Ovary (tissue), 10 donors: ENCODE measurements at regions of chr10 and their contacts with region 1.

Region 1: DNA sequence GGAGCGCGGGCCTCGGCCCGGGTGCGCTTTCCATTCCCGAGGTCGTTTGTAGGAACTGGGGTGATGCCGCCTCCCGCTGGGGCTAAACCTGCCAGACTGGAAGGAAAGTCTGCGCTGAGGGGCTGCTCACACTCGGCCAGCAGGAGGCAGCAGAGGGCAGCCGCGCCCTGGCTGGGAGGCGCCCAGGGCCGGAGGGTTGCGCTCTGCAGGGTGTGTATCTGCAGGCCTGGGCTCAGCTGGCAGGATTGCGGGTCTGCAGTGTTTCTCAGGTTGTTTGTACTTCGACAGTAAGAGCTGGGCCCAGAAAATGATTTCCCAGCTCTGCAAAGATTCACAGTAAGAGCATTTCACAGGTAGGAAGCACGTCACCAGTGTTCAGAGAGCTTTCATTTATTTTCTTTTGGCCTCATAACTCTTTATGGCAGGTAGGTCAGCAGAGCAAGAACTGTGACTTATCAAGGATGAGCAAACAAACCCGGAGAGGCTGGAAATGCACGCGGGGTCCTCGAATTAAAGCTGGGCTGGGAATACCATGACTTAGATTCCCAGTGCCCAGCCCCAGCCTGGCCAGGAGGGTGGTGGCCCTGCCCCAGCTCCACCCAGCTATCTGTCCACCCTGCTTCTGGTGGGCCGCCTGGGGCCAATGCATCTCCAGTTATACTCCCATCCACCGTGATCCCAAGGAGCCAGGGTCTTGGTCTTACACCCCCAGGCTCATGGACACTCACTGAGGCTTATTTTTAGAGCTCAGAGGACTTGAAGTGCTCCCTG is 15.2 kb upstream of the PPP2R2D start:
- DNase-seq: peak; percentile 77 to 90 (median 87)
- H3K4me3 ChIP-seq: no peak overlapping the region
- H3K27ac ChIP-seq: no peak overlapping the region
- H3K4me1 ChIP-seq: peaks cover 2% of the 10 kb centered on the region
- H3K27me3 ChIP-seq: no peaks in the 10 kb centered on the region
- CTCF ChIP-seq: peak; percentile 94 to 98 (median 98)
- EP300 ChIP-seq: no peak
- POLR2A ChIP-seq: no peak

Region 2: GRCh38 chr10:132023092-132023811 is 137.7 kb after region 1 on chr10:
- intact Hi-C with region 1: loop called (anchors 2 to 5 kb)
- DNase-seq: peak; percentile 80 to 93 (median 90)
- H3K4me3 ChIP-seq: peak overlapping the region; percentile 11
- H3K27ac ChIP-seq: no peak overlapping the region
- H3K4me1 ChIP-seq: peaks cover 2% of the 10 kb centered on the region
- H3K27me3 ChIP-seq: no peaks in the 10 kb centered on the region
- CTCF ChIP-seq: peak; percentile 89 to 94 (median 91)
- EP300 ChIP-seq: no peak
- POLR2A ChIP-seq: no peak

Region 3: GRCh38 chr10:132142411-132143161 is 257.0 kb after region 1 on chr10:
- intact Hi-C with region 1: loop called in 3 of 4 experiments (anchors 5 to 10 kb)
- DNase-seq: peak; percentile 52 to 75 (median 68)
- H3K4me3 ChIP-seq: no peak overlapping the region
- H3K27ac ChIP-seq: peak overlapping the region in 1 of 2 donors; percentile 69
- H3K4me1 ChIP-seq: peaks cover 6% of the 10 kb centered on the region
- H3K27me3 ChIP-seq: no peaks in the 10 kb centered on the region
- CTCF ChIP-seq: peak; percentile 43 to 70 (median 70)
- EP300 ChIP-seq: no peak
- POLR2A ChIP-seq: no peak

Region 4: GRCh38 chr10:132354356-132355094 is 468.9 kb after region 1 on chr10:
- intact Hi-C with region 1: no loop called
- DNase-seq: peak in 1 of 5 donors; percentile 29
- H3K4me3 ChIP-seq: no peak overlapping the region
- H3K27ac ChIP-seq: no peak overlapping the region
- H3K4me1 ChIP-seq: no peaks in the 10 kb centered on the region
- H3K27me3 ChIP-seq: no peaks in the 10 kb centered on the region
- CTCF ChIP-seq: no peak
- EP300 ChIP-seq: no peak
- POLR2A ChIP-seq: no peak